CD8-positive, alpha-beta T cell (primary cell): ENCODE measurements at regions of chr12 and their contacts with region 1.

Region 1: DNA sequence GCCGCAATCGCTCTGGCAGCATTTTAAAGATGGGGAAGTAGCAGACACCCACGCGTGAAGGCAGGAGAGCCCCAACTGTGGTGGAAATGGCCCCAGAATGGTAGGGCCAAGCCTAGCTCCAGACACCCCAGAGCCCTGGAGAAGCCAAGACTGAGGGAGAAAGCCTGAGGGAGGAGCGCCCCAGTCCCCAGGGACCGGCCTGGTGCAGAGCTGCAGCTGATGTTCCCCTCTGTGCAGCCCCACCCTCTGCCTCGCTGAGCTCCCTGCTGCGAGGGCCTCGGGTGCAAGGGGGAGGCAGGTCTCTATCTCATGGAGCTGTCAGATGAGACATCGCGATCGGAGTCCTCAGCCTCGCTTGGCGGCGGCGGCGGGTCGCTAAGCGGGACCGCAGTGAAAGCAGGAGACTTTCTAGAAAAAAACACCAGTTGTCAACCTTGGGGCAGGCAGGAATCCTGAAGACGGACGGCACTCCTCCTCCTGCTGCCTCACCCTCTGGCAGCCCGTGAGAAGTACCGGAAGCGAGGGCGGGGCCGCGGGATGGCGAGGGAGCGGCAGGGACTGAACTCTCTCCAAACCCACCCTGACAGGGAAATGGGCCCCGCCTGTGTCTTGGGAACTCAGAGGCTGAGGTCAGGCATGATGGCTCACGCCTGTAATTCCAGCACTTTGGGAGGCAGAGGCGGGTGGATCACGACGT is 6.0 kb downstream of the GAPDH start:
- DNase-seq: peak in 6 of 9 experiments; percentile 38 to 59 (median 47)
- ATAC-seq: no peak
- H3K4me3 ChIP-seq: peak overlapping the region in 1 of 2 experiments; percentile 37
- H3K4me3 Mint-ChIP-seq: peak overlapping the region; percentile 75
- H3K27ac ChIP-seq: no peak overlapping the region
- H3K27ac Mint-ChIP-seq: peak overlapping the region; percentile 73
- H3K4me1 ChIP-seq: peaks cover 36% of the 10 kb centered on the region
- H3K4me1 Mint-ChIP-seq: peaks cover 44% of the 10 kb centered on the region
- H3K27me3 ChIP-seq: no peaks in the 10 kb centered on the region
- H3K27me3 Mint-ChIP-seq: no peaks in the 10 kb centered on the region
- CTCF ChIP-seq: no peak

Region 2: GRCh38 chr12:5945071-5946008 is 595.0 kb before region 1 on chr12 and contains the start of gene ANO2:
- CTCF ChIA-PET with region 1: no interaction called
- POLR2A ChIA-PET with region 1: no interaction called
- intact Hi-C with region 1: no loop called
- DNase-seq: no peak
- ATAC-seq: no peak
- H3K4me3 ChIP-seq: no peak within 1 kb of the TSS
- H3K4me3 Mint-ChIP-seq: no peak within 1 kb of the TSS
- H3K27ac ChIP-seq: no peak within 1 kb of the TSS
- H3K27ac Mint-ChIP-seq: no peak within 1 kb of the TSS
- H3K4me1 ChIP-seq: no peaks in the 10 kb centered on the region
- H3K4me1 Mint-ChIP-seq: peaks cover 4% of the 10 kb centered on the region
- H3K27me3 ChIP-seq: peaks cover 0 to 14% of the 10 kb centered on the region in 2 experiments
- H3K27me3 Mint-ChIP-seq: peaks cover 71% of the 10 kb centered on the region
- CTCF ChIP-seq: no peak
- total RNA-seq, gene ANO2: not detected

Region 3: GRCh38 chr12:6323340-6323994 is 216.9 kb before region 1 on chr12:
- CTCF ChIA-PET with region 1: interaction called, 12 read pairs
- POLR2A ChIA-PET with region 1: no interaction called
- intact Hi-C with region 1: no loop called
- DNase-seq: peak in 6 of 9 experiments; percentile 40 to 83 (median 59)
- ATAC-seq: peak; percentile 85
- H3K4me3 ChIP-seq: peak overlapping the region; percentile 12 to 19
- H3K4me3 Mint-ChIP-seq: peak overlapping the region; percentile 80
- H3K27ac ChIP-seq: peak overlapping the region in 1 of 2 experiments; percentile 54
- H3K27ac Mint-ChIP-seq: peak overlapping the region; percentile 93
- H3K4me1 ChIP-seq: peaks cover 47% of the 10 kb centered on the region
- H3K4me1 Mint-ChIP-seq: peaks cover 63% of the 10 kb centered on the region
- H3K27me3 ChIP-seq: no peaks in the 10 kb centered on the region
- H3K27me3 Mint-ChIP-seq: no peaks in the 10 kb centered on the region
- CTCF ChIP-seq: peak; percentile 82

Region 4: GRCh38 chr12:6461401-6462233 is 78.7 kb before region 1 on chr12:
- CTCF ChIA-PET with region 1: interaction called, 56 read pairs
- POLR2A ChIA-PET with region 1: interaction called, 68 read pairs
- intact Hi-C with region 1: loop called in 1 of 2 experiments (anchors 1 kb)
- DNase-seq: peak; percentile 58 to 97 (median 86)
- ATAC-seq: peak; percentile 77
- H3K4me3 ChIP-seq: peak overlapping the region; percentile 32 to 36
- H3K4me3 Mint-ChIP-seq: peak overlapping the region; percentile 78
- H3K27ac ChIP-seq: peak overlapping the region; percentile 84 to 96
- H3K27ac Mint-ChIP-seq: peak overlapping the region; percentile 99
- H3K4me1 ChIP-seq: peaks cover 87% of the 10 kb centered on the region
- H3K4me1 Mint-ChIP-seq: peaks cover 86% of the 10 kb centered on the region
- H3K27me3 ChIP-seq: no peaks in the 10 kb centered on the region
- H3K27me3 Mint-ChIP-seq: no peaks in the 10 kb centered on the region
- CTCF ChIP-seq: no peak

Region 5: DNA sequence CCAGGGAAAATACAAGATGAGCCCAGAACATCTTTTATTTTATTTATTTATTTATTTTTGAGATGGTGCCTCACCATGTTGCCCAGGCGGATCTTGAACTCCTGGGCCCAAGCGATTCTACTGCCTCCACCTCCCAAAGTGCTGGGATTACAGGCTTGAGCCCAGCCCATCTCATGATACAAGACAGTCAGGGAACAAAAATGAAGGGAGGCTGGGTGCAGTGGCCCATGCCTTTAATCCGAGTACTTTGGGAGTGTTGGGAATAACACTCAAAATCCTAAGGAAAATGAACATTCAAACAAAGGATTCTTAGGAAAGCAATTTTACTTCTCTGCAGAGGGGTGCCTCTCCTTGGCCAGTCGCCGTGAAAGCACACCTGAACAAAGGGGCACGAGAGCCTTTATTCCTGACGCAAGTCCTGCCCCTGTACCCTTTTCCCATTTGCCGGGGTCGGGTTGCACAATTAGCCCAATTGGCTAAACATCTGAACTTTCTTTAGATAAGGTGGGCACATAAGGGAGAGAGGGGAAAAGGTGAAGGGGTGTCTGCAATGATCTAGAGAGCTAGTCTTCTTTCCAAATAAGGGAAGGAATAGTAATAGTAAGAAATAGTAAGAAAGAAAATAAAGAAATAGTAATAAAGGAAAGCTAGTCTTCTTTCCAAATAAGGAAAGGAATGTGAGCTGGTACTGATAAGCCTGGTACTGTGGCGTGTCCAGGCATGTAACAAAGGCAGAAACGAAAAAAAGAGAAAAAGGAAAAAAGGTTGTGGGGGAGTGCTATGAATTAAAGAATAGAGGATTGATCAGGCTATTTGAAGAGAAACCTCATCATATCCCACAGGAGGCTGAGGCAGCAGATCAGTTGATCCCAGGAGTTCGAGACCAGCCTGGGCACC is 33.0 kb before region 1 on chr12:
- CTCF ChIA-PET with region 1: interaction called, 17 read pairs
- POLR2A ChIA-PET with region 1: no interaction called
- intact Hi-C with region 1: no loop called
- DNase-seq: no peak
- ATAC-seq: no peak
- H3K4me3 ChIP-seq: no peak overlapping the region
- H3K4me3 Mint-ChIP-seq: no peak overlapping the region
- H3K27ac ChIP-seq: no peak overlapping the region
- H3K27ac Mint-ChIP-seq: no peak overlapping the region
- H3K4me1 ChIP-seq: no peaks in the 10 kb centered on the region
- H3K4me1 Mint-ChIP-seq: peaks cover 7% of the 10 kb centered on the region
- H3K27me3 ChIP-seq: no peaks in the 10 kb centered on the region
- H3K27me3 Mint-ChIP-seq: no peaks in the 10 kb centered on the region
- CTCF ChIP-seq: no peak

Region 6: DNA sequence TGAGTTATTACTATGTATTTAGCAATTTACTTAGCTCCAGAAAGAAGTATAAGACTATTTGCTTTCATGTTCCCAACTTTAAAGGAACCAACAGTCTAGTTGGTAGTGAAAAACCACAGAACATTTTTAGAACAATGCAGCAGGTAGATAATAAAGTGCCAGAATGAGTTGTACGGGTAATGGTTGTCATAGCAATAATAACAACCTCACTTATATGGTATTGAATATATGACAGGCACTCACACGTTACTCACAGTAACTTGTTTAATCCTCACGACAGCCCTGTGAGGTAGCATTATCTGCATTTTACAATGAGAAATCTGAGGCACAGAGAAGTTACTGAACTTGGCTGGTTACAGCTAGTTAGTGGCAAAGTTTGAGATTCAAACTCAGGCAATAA is 16.6 kb before region 1 on chr12:
- CTCF ChIA-PET with region 1: interaction called, 11 read pairs
- POLR2A ChIA-PET with region 1: no interaction called
- intact Hi-C with region 1: no loop called
- DNase-seq: no peak
- ATAC-seq: no peak
- H3K4me3 ChIP-seq: no peak overlapping the region
- H3K4me3 Mint-ChIP-seq: no peak overlapping the region
- H3K27ac ChIP-seq: no peak overlapping the region
- H3K27ac Mint-ChIP-seq: no peak overlapping the region
- H3K4me1 ChIP-seq: no peaks in the 10 kb centered on the region
- H3K4me1 Mint-ChIP-seq: peaks cover 2% of the 10 kb centered on the region
- H3K27me3 ChIP-seq: no peaks in the 10 kb centered on the region
- H3K27me3 Mint-ChIP-seq: no peaks in the 10 kb centered on the region
- CTCF ChIP-seq: no peak

Region 7: GRCh38 chr12:6563448-6564050 is 23.2 kb after region 1 on chr12:
- CTCF ChIA-PET with region 1: interaction called, 12 read pairs
- POLR2A ChIA-PET with region 1: no interaction called
- intact Hi-C with region 1: no loop called
- DNase-seq: peak; percentile 39 to 82 (median 73)
- ATAC-seq: peak; percentile 27
- H3K4me3 ChIP-seq: no peak overlapping the region
- H3K4me3 Mint-ChIP-seq: no peak overlapping the region
- H3K27ac ChIP-seq: no peak overlapping the region
- H3K27ac Mint-ChIP-seq: peak overlapping the region; percentile 78
- H3K4me1 ChIP-seq: peaks cover 18% of the 10 kb centered on the region
- H3K4me1 Mint-ChIP-seq: peaks cover 42% of the 10 kb centered on the region
- H3K27me3 ChIP-seq: no peaks in the 10 kb centered on the region
- H3K27me3 Mint-ChIP-seq: no peaks in the 10 kb centered on the region
- CTCF ChIP-seq: peak; percentile 71